Left cardiac atrium (tissue), 4 donors: ENCODE measurements at regions of chr11 and their contacts with region 1.

Region 1: GRCh38 chr11:61477727-61478148 is 30.8 kb upstream of the LRRC10B start:
- DNase-seq: peak; percentile 57
- ATAC-seq: peak; percentile 33 to 43

Region 2: GRCh38 chr11:61516675-61517572 is 39.2 kb after region 1 on chr11:
- intact Hi-C with region 1: loop called (anchors 5 kb)
- DNase-seq: no peak
- ATAC-seq: peak; percentile 43

Region 3: DNA sequence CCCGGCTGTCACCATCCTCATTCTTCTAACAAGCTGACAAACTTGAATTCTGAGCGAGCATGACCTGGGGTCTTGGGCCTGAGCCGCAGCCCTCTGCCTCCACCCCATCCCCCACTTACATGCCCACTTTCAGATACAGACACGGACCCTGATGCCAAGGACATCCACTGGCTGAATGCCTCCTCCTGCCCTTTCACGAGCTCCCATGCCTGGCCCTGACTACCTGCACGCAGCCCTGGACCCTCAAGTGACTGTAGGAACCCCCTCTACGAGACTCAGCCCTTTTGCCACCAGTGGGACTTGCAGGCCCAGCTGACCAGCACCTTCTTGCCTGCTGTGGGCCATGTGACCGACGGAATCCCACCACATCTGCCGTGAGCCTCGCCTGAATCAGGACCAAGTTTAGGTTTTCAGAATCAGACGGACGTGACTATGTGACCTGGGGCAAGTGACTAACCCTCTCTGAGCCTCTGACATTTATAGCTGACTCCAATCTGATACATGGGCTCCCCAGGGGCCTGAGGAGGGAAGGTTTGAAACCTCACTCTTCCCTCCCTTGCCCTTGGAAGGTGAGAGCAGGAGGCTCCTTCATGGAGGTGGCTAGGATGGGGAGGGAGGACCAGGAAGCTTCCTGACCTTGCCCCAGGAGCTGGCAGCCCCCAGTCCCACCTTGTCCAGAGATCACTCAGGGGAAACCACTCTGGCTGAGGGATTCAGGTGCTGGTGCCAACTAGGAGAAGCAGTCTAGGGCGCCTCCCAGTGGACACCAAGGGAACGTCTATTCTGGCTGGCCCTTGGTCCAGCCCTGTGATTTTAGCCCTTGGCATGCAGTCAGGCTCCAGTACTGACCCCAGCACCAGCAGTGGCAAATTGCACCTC is 150.1 kb after region 1 on chr11:
- intact Hi-C with region 1: loop called in 1 of 2 experiments (anchors 2 kb)
- DNase-seq: peak; percentile 76
- ATAC-seq: peak; percentile 83 to 87

Region 4: GRCh38 chr11:61639816-61640443 is 162.2 kb after region 1 on chr11:
- intact Hi-C with region 1: loop called in 1 of 2 experiments (anchors 5 kb)
- DNase-seq: no peak
- ATAC-seq: no peak

Region 5: GRCh38 chr11:61718621-61719302 is 241.0 kb after region 1 on chr11:
- intact Hi-C with region 1: no loop called
- DNase-seq: peak; percentile 67
- ATAC-seq: peak; percentile 87 to 90